CD14-positive monocyte (primary cell): ENCODE measurements at regions of chr17 and their contacts with region 1.

Region 1: GRCh38 chr17:51120739-51121617 is at the start of gene SPAG9:
- DNase-seq: peak; percentile 95 to 97 (median 97)
- H3K4me3 ChIP-seq: peak within 1 kb of the TSS; percentile 98 to 99 (median 99)
- H3K4me3 Mint-ChIP-seq: peak within 1 kb of the TSS; percentile 95 to 97
- H3K27ac ChIP-seq: peak within 1 kb of the TSS; percentile 99 to 100
- H3K27ac Mint-ChIP-seq: peak within 1 kb of the TSS; percentile 100
- H3K4me1 ChIP-seq: peaks cover 27 to 29% of the 10 kb centered on the region in 2 donors
- H3K4me1 Mint-ChIP-seq: peaks cover 51% of the 10 kb centered on the region
- H3K27me3 ChIP-seq: no peaks in the 10 kb centered on the region
- H3K27me3 Mint-ChIP-seq: no peaks in the 10 kb centered on the region
- CTCF ChIP-seq: no peak
- polyA plus RNA-seq, gene SPAG9: 4.9 to 33.1 (median 8.5) TPM

Region 2: DNA sequence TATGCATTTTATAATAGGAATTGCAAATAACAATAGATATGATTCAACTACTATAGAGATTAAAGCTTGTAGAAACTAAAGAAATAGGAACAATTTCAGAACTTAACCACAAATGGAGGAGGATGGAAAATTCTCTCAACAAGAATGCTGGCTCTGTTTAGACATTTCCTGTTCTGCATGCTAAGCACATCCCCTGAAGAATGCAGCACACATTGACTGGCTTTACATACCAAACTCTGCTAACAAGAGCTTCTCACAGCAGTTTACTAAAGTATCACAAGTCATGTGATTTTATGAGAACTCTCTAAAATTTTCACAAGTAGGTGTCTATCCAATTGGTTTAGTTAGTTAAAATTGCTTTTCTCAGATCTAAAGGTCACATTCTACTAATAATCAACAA is 85.5 kb before region 1 on chr17:
- intact Hi-C with region 1: no loop called
- DNase-seq: no peak
- H3K4me3 ChIP-seq: no peak overlapping the region
- H3K4me3 Mint-ChIP-seq: no peak overlapping the region
- H3K27ac ChIP-seq: peak overlapping the region in 1 of 2 donors; percentile 37
- H3K27ac Mint-ChIP-seq: no peak overlapping the region
- H3K4me1 ChIP-seq: peaks cover 0 to under 1% of the 10 kb centered on the region in 2 donors
- H3K4me1 Mint-ChIP-seq: peaks cover 17% of the 10 kb centered on the region
- H3K27me3 ChIP-seq: no peaks in the 10 kb centered on the region
- H3K27me3 Mint-ChIP-seq: peaks cover 0 to 3% (median 0%) of the 10 kb centered on the region in 3 donors
- CTCF ChIP-seq: no peak

Region 3: DNA sequence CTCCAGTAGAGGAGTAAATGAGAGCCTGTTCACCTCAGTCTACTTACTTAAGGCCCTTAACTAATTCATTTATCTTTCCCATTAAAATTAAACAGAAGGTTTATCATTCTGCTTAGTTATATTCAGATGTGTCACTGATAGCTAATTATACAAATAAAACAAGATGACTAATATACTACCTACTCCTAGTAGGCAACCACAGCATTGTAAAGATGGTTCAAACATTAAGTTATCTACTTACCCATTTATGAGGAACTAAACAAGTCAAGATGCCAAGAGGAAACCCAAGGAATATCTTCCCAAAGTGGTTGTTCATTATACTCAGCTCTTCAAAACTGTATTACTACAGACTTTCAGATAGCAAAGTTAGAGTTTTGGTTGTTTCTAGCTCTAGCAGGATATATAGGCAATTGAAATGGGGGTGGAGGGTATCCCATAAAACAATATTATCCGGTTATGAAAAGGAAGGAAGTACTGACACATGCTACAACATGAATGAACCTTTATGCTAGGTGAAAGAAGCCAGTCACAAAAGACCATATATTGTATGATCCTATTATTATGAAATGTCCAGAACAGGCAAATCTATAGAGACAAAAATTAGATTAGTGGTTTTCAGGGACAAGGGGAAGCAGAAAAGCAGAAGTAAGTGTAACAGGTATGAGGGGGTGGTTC is 56.8 kb before region 1 on chr17:
- intact Hi-C with region 1: loop called in 1 of 2 experiments (anchors 10 kb)
- DNase-seq: no peak
- H3K4me3 ChIP-seq: no peak overlapping the region
- H3K4me3 Mint-ChIP-seq: no peak overlapping the region
- H3K27ac ChIP-seq: no peak overlapping the region
- H3K27ac Mint-ChIP-seq: no peak overlapping the region
- H3K4me1 ChIP-seq: no peaks in the 10 kb centered on the region
- H3K4me1 Mint-ChIP-seq: peaks cover 8% of the 10 kb centered on the region
- H3K27me3 ChIP-seq: no peaks in the 10 kb centered on the region
- H3K27me3 Mint-ChIP-seq: peaks cover 0 to 1% (median 0%) of the 10 kb centered on the region in 3 donors
- CTCF ChIP-seq: no peak

Region 4: DNA sequence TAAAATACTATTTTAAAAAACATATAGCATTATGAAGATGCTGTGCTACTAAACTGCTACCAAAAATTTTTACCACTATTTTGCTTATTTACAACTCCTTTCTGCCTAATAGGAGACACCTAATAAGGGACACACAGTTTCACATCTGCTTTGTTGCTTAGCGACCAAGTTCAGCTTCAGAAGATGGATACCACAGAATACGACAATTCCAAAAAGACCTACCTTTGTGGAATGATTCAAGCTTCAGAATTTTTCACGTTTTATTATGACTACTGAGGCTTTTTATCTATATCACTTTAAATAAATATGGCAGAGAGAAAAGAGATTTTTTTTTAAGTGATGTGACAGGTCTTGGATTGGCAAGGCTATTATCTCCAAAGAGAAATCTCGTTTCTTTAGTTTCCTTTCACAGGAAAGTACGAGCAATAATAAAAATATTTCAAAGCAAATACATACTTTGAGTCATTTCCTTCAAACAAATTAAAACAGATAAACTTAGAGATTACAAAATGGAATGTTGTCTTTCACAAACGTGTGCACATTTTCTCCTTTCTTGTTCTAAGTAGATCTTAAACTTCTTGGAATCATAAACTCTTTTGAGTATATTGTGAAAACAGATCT is 35.7 kb before region 1 on chr17:
- intact Hi-C with region 1: loop called (anchors 5 kb)
- DNase-seq: no peak
- H3K4me3 ChIP-seq: no peak overlapping the region
- H3K4me3 Mint-ChIP-seq: no peak overlapping the region
- H3K27ac ChIP-seq: no peak overlapping the region
- H3K27ac Mint-ChIP-seq: peak overlapping the region in 1 of 7 donors; percentile 25
- H3K4me1 ChIP-seq: peaks cover 22 to 25% of the 10 kb centered on the region in 2 donors
- H3K4me1 Mint-ChIP-seq: peaks cover 35% of the 10 kb centered on the region
- H3K27me3 ChIP-seq: no peaks in the 10 kb centered on the region
- H3K27me3 Mint-ChIP-seq: peaks cover 0 to 2% (median 0%) of the 10 kb centered on the region in 3 donors
- CTCF ChIP-seq: no peak

Region 5: GRCh38 chr17:51153210-51154072 is 32.5 kb after region 1 on chr17 and contains the start of gene NME1:
- intact Hi-C with region 1: loop called (anchors 1 to 2 kb)
- DNase-seq: peak; percentile 97 to 99 (median 99)
- H3K4me3 ChIP-seq: peak within 1 kb of the TSS; percentile 68 to 86 (median 80)
- H3K4me3 Mint-ChIP-seq: no peak within 1 kb of the TSS
- H3K27ac ChIP-seq: peak within 1 kb of the TSS; percentile 55 to 87
- H3K27ac Mint-ChIP-seq: no peak within 1 kb of the TSS
- H3K4me1 ChIP-seq: peaks cover 18 to 19% of the 10 kb centered on the region in 2 donors
- H3K4me1 Mint-ChIP-seq: no peaks in the 10 kb centered on the region
- H3K27me3 ChIP-seq: no peaks in the 10 kb centered on the region
- H3K27me3 Mint-ChIP-seq: peaks cover 0 to 2% (median 0%) of the 10 kb centered on the region in 3 donors
- CTCF ChIP-seq: peak; percentile 76
- polyA plus RNA-seq, gene NME1: 14.8 to 51.4 (median 20.8) TPM

Region 6: DNA sequence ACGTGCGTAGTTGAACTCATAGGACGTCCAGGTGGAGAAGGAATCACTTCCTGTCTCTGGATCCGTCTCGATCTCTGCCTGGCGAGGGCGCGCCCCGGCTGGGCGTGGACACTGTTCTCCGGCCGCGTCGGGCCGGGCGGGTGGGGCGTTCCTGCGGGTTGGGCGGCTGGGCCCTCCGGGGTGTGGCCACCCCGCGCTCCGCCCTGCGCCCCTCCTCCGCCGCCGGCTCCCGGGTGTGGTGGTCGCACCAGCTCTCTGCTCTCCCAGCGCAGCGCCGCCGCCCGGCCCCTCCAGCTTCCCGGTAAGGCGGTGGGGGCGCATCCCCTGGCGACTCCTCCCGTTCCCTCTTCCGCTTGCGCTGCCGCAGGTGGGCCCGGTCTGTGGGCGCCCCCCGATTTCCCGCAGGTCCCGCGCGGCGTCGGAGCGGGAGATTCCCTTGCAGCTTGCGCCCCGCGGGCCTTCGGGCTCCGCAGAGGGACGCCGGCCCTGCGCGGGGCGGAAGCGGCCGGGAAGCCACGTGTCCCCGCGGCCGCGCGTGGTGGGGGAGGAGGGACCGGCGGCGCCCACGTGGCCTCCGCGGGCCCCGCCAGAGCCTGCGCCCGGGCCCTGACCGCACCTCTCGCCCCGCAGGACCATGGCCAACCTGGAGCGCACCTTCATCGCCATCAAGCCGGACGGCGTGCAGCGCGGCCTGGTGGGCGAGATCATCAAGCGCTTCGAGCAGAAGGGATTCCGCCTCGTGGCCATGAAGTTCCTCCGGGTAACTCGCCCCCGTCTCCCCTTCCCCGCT is 45.4 kb after region 1 on chr17 and contains the start of gene NME2:
- intact Hi-C with region 1: no loop called
- DNase-seq: peak; percentile 58 to 67 (median 66)
- H3K4me3 ChIP-seq: peak within 1 kb of the TSS; percentile 76 to 91 (median 83)
- H3K4me3 Mint-ChIP-seq: peak within 1 kb of the TSS; percentile 92 to 99
- H3K27ac ChIP-seq: peak within 1 kb of the TSS; percentile 56 to 92
- H3K27ac Mint-ChIP-seq: peak within 1 kb of the TSS; percentile 89 to 97 (median 93)
- H3K4me1 ChIP-seq: peaks cover 16 to 24% of the 10 kb centered on the region in 2 donors
- H3K4me1 Mint-ChIP-seq: peaks cover 23% of the 10 kb centered on the region
- H3K27me3 ChIP-seq: no peaks in the 10 kb centered on the region
- H3K27me3 Mint-ChIP-seq: peaks cover 0 to 2% (median 0%) of the 10 kb centered on the region in 3 donors
- CTCF ChIP-seq: no peak
- polyA plus RNA-seq, gene NME2: 240 to 307 (median 259) TPM

Region 7: DNA sequence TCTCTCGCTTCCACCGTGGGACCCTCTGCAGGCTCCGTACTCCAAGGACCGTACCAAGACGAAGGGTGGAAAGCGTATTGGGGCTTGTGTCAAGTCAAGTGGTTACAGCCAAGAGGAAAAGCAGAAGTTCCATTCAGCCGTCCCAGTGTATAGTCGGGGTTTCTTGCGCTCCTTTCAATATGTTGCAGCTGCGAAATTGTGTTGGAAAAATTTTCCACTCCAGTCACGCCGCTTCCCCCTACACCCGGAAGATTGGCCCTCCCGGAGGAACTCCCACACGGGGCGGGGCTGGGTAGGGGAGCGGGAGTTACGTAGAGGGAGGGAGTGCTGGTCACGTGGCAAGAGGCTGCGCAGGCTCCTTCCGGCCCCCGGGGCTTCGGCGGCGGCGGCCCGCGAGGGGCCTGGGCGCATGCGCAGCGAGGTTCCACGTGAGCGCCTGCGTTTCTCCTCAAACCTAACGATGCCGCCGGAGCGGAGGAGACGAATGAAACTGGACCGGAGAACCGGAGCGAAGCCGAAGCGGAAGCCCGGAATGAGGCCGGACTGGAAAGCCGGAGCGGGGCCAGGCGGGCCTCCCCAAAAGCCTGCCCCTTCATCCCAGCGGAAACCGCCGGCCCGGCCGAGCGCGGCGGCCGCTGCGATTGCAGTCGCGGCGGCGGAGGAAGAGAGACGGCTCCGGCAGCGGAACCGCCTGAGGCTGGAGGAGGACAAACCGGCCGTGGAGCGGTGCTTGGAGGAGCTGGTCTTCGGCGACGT is 139.3 kb after region 1 on chr17 and contains the start of gene UTP18:
- intact Hi-C with region 1: loop called in 1 of 2 experiments (anchors 5 kb)
- DNase-seq: peak; percentile 95 to 98 (median 96)
- H3K4me3 ChIP-seq: peak within 1 kb of the TSS; percentile 84 to 93 (median 93)
- H3K4me3 Mint-ChIP-seq: peak within 1 kb of the TSS; percentile 87 to 93
- H3K27ac ChIP-seq: peak within 1 kb of the TSS; percentile 97 to 99
- H3K27ac Mint-ChIP-seq: peak within 1 kb of the TSS; percentile 96 to 99 (median 98)
- H3K4me1 ChIP-seq: peaks cover 36 to 57% of the 10 kb centered on the region in 2 donors
- H3K4me1 Mint-ChIP-seq: peaks cover 47% of the 10 kb centered on the region
- H3K27me3 ChIP-seq: no peaks in the 10 kb centered on the region
- H3K27me3 Mint-ChIP-seq: peaks cover 0 to 2% (median 1%) of the 10 kb centered on the region in 3 donors
- CTCF ChIP-seq: no peak
- polyA plus RNA-seq, gene UTP18: 13.0 to 31.9 (median 31.6) TPM